Activated CD4-positive, alpha-beta T cell treated with anti-CD3 and anti-CD28 coated beads for 36 hours (primary cell): ENCODE measurements at regions of chr13 and their contacts with region 1.

Region 1: GRCh38 chr13:22073718-22074117 is 402.8 kb downstream of the FGF9 start:
- DNase-seq: no peak
- ATAC-seq: peak; percentile 39
- H3K4me3 Mint-ChIP-seq: no peak overlapping the region
- H3K27ac Mint-ChIP-seq: no peak overlapping the region
- H3K4me1 Mint-ChIP-seq: peaks cover 44% of the 10 kb centered on the region
- H3K27me3 Mint-ChIP-seq: no peaks in the 10 kb centered on the region

Region 2: GRCh38 chr13:22126433-22127021 is 52.8 kb after region 1 on chr13:
- CTCF ChIA-PET with region 1: no interaction called
- POLR2A ChIA-PET with region 1: no interaction called
- intact Hi-C with region 1: loop called in 1 of 2 experiments (anchors 1 kb)
- DNase-seq: no peak
- ATAC-seq: peak; percentile 80
- H3K4me3 Mint-ChIP-seq: no peak overlapping the region
- H3K27ac Mint-ChIP-seq: peak overlapping the region; percentile 64
- H3K4me1 Mint-ChIP-seq: peaks cover 32% of the 10 kb centered on the region
- H3K27me3 Mint-ChIP-seq: no peaks in the 10 kb centered on the region

Region 3: GRCh38 chr13:22161871-22162270 is 88.2 kb after region 1 on chr13:
- CTCF ChIA-PET with region 1: no interaction called
- POLR2A ChIA-PET with region 1: no interaction called
- intact Hi-C with region 1: loop called in 1 of 2 experiments (anchors 5 kb)
- DNase-seq: no peak
- ATAC-seq: peak; percentile 70
- H3K4me3 Mint-ChIP-seq: no peak overlapping the region
- H3K27ac Mint-ChIP-seq: no peak overlapping the region
- H3K4me1 Mint-ChIP-seq: peaks cover 25% of the 10 kb centered on the region
- H3K27me3 Mint-ChIP-seq: no peaks in the 10 kb centered on the region